AG04450 (cell line): ENCODE measurements at regions of chr12 and their contacts with region 1.

Region 1: GRCh38 chr12:51994959-51995358 is 11.8 kb upstream of the TAMALIN start:
- DNase-seq: no peak
- H3K4me3 ChIP-seq: no peak overlapping the region
- H3K27ac ChIP-seq: peak overlapping the region; percentile 31
- H3K27me3 ChIP-seq: no peaks in the 10 kb centered on the region
- CTCF ChIP-seq: no peak

Region 2: DNA sequence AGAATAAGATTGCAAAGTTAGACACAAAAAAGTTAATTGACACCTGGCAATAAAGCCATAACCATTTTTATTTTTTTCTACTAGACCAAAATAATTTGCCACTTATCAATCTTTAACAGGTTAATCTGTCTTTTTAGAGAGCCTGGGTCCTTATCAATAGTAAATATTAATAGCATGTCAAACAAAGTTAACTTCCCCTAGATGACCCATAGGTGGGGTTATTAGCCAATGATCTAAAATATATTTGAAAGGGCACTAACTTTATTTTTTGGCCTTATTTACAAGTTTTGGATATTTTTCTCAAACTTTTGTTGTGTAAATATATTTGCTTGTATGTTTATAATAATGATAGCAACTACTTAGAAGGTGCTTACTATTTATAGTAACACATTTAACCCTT is 103.1 kb before region 1 on chr12:
- CTCF ChIA-PET with region 1: interaction called, 11 read pairs
- POLR2A ChIA-PET with region 1: no interaction called
- DNase-seq: no peak
- H3K4me3 ChIP-seq: no peak overlapping the region
- H3K27ac ChIP-seq: no peak overlapping the region
- H3K27me3 ChIP-seq: no peaks in the 10 kb centered on the region
- CTCF ChIP-seq: peak; percentile 52

Region 3: GRCh38 chr12:51941011-51941581 is 53.9 kb before region 1 on chr12:
- CTCF ChIA-PET with region 1: interaction called, 15 read pairs
- POLR2A ChIA-PET with region 1: no interaction called
- DNase-seq: peak; percentile 32
- H3K4me3 ChIP-seq: no peak overlapping the region
- H3K27ac ChIP-seq: no peak overlapping the region
- H3K27me3 ChIP-seq: peaks cover 4% of the 10 kb centered on the region
- CTCF ChIP-seq: no peak

Region 4: DNA sequence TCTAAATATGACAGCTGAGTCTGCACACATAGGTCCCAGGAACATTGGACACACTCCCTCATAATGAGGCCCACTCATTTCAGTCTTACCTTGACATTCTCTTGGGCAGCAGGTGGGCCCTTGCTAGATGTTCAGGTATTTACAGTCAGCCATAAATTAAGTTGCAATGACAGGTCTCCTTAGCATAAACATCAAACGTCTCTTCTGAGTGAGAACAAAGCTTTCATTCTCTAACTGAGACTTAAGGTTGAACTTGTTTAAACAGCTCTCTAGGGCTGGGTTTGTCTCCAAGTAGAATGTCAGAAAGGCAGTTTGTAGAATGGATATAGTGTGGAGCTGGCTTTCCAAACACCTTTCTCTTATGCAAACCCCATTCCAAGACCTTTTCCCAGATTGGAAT is 33.1 kb before region 1 on chr12:
- CTCF ChIA-PET with region 1: interaction called, 15 read pairs
- POLR2A ChIA-PET with region 1: no interaction called
- DNase-seq: no peak
- H3K4me3 ChIP-seq: no peak overlapping the region
- H3K27ac ChIP-seq: no peak overlapping the region
- H3K27me3 ChIP-seq: no peaks in the 10 kb centered on the region
- CTCF ChIP-seq: no peak

Region 5: GRCh38 chr12:51970904-51971646 is 23.9 kb before region 1 on chr12:
- CTCF ChIA-PET with region 1: interaction called, 11 read pairs
- POLR2A ChIA-PET with region 1: no interaction called
- DNase-seq: no peak
- H3K4me3 ChIP-seq: peak overlapping the region; percentile 5; the same call in 1 of the 2 replicates
- H3K27ac ChIP-seq: peak overlapping the region; percentile 79
- H3K27me3 ChIP-seq: no peaks in the 10 kb centered on the region
- CTCF ChIP-seq: peak; percentile 83

Region 6: DNA sequence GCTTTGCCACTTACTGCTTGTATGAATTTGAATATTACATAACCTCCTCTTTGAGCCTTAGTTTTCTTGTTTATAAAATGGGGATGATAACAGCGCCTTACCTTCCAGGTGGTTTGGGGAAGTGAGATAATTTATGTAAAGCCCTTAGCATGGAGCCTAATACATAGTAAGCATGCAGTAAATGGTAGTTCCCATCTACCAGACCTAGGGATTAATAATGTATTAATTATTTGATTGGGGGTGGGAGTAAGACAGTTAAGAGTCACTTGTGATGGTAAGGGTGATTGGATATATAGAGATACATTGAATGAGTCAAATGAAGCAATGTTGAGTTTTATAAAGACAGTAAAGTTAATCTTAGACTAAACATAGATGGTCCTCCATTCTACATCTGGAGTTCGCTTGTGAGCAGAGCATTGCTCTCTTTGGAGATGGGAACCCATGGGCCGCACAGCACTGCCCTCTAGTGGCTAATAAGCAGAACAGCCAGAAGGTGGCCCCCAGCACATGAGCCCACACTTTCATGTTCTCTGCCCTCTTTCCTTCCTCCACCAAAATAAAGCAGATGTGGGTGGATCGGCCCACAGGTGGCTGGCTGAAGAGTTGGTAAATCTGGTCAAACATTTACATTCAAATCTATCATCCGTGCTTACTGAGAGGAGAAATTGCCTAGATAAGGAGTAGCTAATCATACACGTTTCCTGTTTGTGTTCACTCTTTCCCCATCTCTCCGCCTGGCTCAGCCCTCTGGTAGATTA is 14.7 kb before region 1 on chr12:
- CTCF ChIA-PET with region 1: interaction called, 15 read pairs
- POLR2A ChIA-PET with region 1: no interaction called
- DNase-seq: no peak
- H3K4me3 ChIP-seq: no peak overlapping the region
- H3K27ac ChIP-seq: no peak overlapping the region
- H3K27me3 ChIP-seq: no peaks in the 10 kb centered on the region
- CTCF ChIP-seq: peak; percentile 98

Region 7: GRCh38 chr12:52010152-52010622 is 15.2 kb after region 1 on chr12:
- CTCF ChIA-PET with region 1: interaction called, 76 read pairs
- POLR2A ChIA-PET with region 1: interaction called, 7 read pairs
- DNase-seq: peak; percentile 81
- H3K4me3 ChIP-seq: peak overlapping the region; percentile 43
- H3K27ac ChIP-seq: peak overlapping the region; percentile 87
- H3K27me3 ChIP-seq: peaks cover 6% of the 10 kb centered on the region
- CTCF ChIP-seq: no peak

Region 8: GRCh38 chr12:52258335-52258901 is 263.5 kb after region 1 on chr12:
- CTCF ChIA-PET with region 1: no interaction called
- POLR2A ChIA-PET with region 1: no interaction called
- DNase-seq: no peak
- H3K4me3 ChIP-seq: peak overlapping the region; percentile 17; the same call in 1 of the 2 replicates
- H3K27ac ChIP-seq: no peak overlapping the region
- H3K27me3 ChIP-seq: peaks cover 52% of the 10 kb centered on the region
- CTCF ChIP-seq: no peak